ENCODE measurements at regions of chr15 and their contacts with region 1.

Region 1: GRCh38 chr15:69225355-69226025 is 65.1 kb downstream of the GLCE start:
- DNase-seq: no peak
- H3K4me3 ChIP-seq: no peak overlapping the region
- H3K27ac ChIP-seq: no peak overlapping the region
- H3K27me3 ChIP-seq: no peaks in the 10 kb centered on the region
- CTCF ChIP-seq: peak; percentile 48

Region 2: DNA sequence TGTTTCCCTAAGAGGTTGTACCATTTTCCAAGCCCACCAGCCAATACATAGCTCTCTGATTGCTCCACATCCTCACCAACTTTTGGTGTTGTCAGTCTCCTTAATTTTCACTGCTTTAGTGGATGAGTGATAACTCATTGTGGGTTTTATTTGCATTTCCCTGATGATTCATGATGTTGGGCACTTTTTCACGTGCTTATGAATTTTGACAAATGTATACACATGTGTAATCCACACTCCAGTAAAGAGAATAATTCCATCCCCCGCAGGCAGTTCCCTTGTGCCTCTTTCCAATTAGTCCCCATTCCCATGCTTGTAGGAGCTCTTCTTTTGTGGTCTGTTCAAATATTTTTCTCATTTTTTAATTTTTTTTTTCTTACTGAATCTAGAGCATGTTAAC is 457.2 kb before region 1 on chr15:
- CTCF ChIA-PET with region 1: no interaction called
- POLR2A ChIA-PET with region 1: no interaction called
- DNase-seq: no peak
- H3K4me3 ChIP-seq: no peak overlapping the region
- H3K27ac ChIP-seq: no peak overlapping the region
- H3K27me3 ChIP-seq: peaks cover 7% of the 10 kb centered on the region
- CTCF ChIP-seq: no peak

Region 3: DNA sequence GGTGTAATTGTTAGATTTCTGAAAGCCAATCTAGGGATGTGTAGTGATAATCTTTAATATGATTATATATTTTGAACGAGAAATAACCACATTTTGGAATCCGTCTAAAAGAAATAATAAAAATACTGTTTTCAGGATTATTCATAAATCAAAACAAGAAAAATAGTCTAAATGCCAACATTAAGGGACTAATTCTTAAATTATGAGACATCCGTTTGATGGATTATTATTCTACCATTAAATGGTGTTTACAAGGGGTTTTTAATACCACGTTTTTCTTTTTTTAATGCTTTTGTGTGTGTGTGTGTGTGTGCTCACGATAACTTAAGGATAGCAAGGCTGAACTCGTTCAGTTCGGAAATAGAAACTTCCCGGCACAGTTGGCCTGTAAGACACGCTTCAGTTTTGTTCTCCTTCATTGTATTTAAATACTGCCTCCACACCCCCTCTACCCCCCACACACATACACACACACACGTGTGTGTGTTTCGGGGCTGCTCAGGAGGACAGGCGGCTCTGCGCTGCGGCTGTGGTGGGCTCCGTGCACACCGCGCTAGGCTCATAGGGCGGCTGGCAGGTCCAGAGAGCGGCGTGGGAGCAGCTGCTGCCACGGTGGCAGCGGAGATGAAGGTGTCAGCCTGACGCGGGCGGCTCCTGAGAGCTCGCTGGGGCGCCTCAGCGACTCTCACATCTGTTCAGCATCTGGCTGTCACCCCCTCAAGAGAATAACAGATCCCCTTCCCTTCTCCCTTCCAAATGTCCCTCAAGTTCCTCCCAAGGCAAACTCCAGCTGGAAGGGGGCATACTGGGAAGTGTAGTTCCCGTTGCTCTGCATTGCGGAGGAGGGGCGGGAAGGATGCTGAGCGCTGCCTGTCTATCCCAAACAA is 381.8 kb before region 1 on chr15:
- CTCF ChIA-PET with region 1: no interaction called
- POLR2A ChIA-PET with region 1: no interaction called
- DNase-seq: no peak
- H3K4me3 ChIP-seq: peak overlapping the region; percentile 28
- H3K27ac ChIP-seq: no peak overlapping the region
- H3K27me3 ChIP-seq: peaks cover 43% of the 10 kb centered on the region
- CTCF ChIP-seq: no peak

Region 4: GRCh38 chr15:69160141-69160993 is 65.1 kb before region 1 on chr15 and contains the start of gene GLCE:
- CTCF ChIA-PET with region 1: interaction called, 11 read pairs
- POLR2A ChIA-PET with region 1: no interaction called
- DNase-seq: peak; percentile 91
- H3K4me3 ChIP-seq: peak within 1 kb of the TSS; percentile 84
- H3K27ac ChIP-seq: peak within 1 kb of the TSS; percentile 77
- H3K27me3 ChIP-seq: no peaks in the 10 kb centered on the region
- CTCF ChIP-seq: no peak
- polyA plus RNA-seq, gene GLCE: 35.7 and 48.1 TPM in 2 replicates

Region 5: DNA sequence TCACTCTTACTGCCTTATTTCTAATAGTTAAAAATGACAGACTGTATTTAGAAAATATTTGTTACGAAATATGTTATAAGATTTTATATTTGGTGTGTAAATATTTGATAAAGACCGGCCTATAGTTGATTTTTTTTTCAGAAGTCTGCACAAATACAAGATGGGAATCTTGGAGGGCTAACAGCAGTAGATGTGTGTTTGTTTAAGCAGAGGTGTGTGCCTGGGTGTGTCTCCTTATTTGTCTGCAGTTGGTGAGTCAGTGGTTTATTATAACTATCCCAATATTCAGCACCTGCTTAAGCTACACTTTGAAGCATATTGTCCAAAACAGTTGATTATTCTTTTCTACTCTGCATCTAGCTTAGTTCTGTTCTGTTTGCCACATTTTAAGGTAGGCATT is 52.7 kb before region 1 on chr15:
- CTCF ChIA-PET with region 1: no interaction called
- POLR2A ChIA-PET with region 1: no interaction called
- DNase-seq: no peak
- H3K4me3 ChIP-seq: no peak overlapping the region
- H3K27ac ChIP-seq: no peak overlapping the region
- H3K27me3 ChIP-seq: no peaks in the 10 kb centered on the region
- CTCF ChIP-seq: no peak

Region 6: DNA sequence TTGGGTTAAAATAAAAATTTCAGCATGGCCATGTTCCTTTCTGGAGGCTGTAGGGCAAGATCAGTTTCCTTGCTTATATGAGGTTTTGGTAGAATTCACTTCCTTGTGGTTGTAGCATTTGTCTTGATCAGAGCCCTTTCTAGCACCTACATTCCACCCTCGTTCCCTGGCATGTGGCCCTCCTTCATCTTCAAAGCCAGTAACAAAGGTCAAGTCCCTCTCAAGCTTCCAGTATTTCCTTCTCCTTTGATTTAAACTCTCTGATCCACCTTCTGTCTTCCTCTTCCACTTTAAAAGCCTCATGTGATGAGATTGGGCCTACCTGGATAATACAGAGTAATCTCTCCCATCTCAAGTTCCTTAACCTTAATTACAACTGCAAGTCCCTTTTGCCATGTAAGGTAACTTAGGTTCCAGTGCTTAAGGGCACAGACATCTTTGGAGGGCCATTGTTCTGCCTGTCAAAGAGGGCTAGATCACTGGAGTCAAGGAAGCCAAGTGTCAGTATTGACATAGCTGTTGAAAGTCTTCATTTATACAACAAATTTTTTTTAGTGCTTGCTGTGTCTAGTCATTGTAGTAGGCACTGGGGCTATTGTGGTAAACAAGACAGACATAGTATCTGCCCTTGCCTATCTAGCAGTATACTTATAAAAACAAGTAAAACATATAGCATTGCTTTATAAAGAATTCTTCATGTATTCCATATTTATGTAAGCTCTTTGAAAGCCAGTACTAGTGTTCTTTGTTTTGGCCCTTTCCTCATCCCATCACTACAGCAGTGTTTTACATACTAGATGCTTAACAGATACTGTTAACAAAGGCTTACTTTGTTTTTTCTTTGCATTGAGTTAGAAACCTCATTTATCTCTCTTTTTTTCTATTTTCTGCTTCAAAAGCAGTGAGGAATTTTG is 24.4 kb before region 1 on chr15:
- CTCF ChIA-PET with region 1: no interaction called
- POLR2A ChIA-PET with region 1: no interaction called
- DNase-seq: no peak
- H3K4me3 ChIP-seq: no peak overlapping the region
- H3K27ac ChIP-seq: no peak overlapping the region
- H3K27me3 ChIP-seq: no peaks in the 10 kb centered on the region
- CTCF ChIP-seq: no peak